Right ventricle myocardium inferior (tissue), 1 donor: ENCODE measurements at regions of chr3 and their contacts with region 1.

Region 1: DNA sequence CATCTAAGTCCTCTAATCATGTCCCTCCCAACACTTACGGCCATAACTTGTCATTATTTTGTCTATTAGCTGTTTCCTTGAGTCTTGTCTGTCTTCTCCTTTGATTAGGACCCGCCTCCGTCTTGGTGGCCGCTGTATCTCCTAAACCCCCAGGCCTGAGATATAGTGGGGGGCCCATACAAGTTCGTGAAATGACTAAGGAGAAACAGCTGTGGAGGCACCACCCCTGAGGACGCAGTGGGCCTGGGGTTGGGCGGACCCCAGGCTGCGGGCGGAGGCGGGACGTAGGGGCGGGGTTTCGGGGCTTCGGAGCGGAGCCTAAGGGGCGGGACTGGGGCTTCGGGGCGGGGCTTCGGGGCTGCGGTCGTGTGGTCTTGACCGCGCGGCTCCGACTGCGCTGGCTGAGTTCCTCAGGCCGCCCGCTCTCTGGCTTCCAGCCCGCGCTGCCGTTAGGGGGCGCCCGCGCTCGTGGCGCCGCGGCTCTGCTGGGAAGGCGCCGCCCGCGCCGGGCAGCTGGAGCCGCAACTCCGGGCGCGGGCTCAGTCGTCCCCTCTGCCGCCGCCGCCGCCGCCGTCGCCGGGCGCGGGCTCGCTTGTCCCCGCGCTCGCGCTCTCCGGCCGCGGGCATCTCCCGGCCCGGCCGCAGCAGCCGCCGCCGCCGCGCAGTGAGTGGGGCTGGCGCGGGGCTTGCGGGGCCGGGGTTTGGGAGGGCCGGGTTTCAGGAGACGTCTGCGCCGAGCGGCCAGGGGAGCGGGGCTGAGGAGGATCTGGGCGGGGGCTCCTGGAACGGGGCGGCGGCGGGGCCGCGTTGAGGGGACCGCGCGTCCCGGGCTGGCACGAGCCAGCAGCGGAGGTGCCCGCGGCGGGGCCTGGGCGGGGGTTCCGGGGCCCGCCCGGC is at the start of gene KCTD6:
- DNase-seq: peak; percentile 96
- ATAC-seq: peak; percentile 97
- total RNA-seq, gene KCTD6: 11.3 TPM

Region 2: DNA sequence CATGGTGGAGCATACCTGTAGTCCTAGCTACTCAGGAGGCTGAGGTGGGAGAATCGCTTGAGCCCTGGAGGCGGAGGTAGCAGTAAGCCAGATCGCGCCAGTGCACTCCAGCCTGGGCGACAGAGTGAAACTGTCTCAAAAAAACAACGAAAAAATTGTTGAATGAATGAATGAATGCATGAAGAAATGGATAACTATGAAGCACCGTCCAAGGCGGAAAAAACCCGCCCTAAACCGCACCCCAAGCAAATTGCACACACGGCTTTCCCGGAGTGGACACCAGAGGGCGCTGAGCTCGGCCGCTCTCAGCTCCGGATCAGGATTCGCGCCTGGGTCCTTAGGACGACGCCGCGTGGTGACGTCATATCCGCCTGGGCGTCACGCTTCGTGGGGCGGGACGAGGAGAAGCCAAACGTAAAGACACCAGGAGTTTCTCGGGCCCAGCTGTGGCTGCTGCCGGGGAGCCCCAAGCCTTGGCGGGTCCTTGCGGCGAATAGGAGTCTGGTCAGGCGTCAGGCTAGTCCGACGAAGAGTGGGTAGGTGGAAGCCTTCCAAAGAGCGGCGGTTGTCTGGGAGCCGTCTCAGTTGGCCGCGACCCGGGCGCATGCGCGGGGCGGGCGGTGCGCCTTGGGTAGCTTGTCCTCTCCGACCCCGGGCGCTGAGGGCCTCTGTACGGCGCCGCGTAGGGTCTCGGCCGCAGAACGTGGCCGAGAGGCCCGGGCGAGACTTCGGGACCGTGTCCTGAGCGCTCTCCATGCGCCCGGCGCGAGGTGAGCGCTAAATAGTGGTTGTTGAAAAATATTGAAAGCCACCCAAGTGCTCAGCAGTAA is 185.7 kb before region 1 on chr3 and contains the starts of genes HTD2 and RPP14:
- intact Hi-C with region 1: loop called (anchors 5 kb)
- DNase-seq: peak; percentile 100
- ATAC-seq: peak; percentile 96
- total RNA-seq, gene HTD2: 14.7 TPM
- total RNA-seq, gene RPP14: 23.2 TPM

Region 3: GRCh38 chr3:58332575-58333188 is 159.1 kb before region 1 on chr3 and contains the start of gene PXK:
- intact Hi-C with region 1: loop called (anchors 2 kb)
- DNase-seq: peak; percentile 93
- ATAC-seq: peak; percentile 96
- total RNA-seq, gene PXK: 13.3 TPM

Region 4: DNA sequence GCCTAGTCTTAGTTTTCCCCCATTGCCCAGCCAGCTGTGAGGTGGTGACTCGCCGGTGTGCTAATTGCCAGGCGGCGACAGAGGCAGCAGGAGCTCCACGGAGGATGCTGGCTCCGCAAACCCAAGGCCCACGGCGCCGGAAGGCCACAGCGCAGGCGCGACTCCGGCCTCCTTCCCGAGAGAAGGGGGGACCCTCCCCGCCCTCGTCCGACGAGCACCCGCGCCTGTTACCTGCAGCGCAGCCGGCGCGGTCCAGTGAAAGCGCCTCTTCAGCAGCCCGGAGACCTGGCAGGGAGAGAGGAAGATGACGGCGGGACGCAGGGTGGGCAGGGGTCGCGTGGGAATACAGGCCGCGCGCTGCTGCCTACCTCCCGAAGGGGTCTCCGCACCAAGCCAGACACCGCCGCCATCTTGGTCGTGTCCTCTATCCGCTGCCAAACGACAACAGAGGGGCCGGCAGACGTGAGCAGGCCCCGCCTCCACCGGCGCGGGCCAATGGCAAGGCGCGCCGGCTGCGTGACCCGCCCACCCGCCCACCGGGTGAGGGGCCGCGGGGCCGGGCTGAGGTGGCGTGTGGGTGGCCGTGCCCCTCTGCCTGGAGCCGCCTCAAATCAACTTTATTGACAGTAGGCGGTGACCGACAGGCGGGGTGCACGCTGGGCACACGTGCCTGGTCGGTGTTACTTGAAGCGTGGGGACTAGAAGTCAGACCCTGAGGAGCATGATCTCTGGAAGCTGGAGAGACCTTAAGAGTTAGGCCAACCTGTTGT is 58.2 kb before region 1 on chr3 and contains the start of gene PDHB:
- intact Hi-C with region 1: loop called (anchors 2 kb)
- DNase-seq: peak; percentile 96
- ATAC-seq: peak; percentile 98
- total RNA-seq, gene PDHB: 206 TPM

Region 5: DNA sequence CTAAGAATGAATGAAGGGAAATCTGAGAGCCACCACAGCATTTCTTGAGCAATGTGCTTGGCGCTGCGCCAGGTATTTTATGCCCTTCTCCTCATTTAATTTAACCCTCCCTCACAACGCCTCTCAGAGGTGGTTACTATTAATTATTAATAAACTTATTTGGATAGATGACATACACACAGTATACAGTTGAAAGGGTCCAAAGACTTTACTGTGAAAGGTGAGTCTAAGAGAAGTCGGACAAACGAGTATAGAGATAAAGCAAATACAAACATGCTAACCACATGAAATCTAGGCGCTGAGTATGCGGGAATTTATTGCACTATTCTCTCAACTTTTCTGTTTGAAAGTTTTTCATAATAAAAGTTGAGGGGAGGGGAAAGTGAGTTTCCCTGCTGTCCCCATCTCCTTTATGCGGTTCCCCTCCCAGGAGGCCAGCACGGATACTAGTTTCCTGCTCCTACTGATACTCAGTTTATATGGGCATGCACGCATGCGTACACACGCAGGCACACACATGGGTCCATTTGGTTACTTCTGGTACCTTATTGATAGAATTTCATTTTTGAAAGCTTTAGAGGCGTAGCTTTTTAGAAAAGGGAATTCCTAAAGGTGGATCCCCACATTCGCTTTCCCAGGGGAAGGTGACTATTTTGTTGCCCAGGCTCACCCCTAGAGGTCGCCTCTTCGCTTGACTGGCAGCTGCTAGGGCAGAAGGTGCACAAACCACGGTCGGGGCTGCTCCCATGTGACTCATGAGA is 28.4 kb before region 1 on chr3:
- intact Hi-C with region 1: loop called (anchors 2 kb)
- DNase-seq: peak; percentile 79
- ATAC-seq: peak; percentile 90

Region 6: GRCh38 chr3:59235634-59236012 is 743.9 kb after region 1 on chr3:
- intact Hi-C with region 1: no loop called
- DNase-seq: no peak
- ATAC-seq: no peak